ENCODE measurements at regions of chr5 and their contacts with region 1.

Region 1: GRCh38 chr5:64958757-64959391 is 190.1 kb downstream of the CWC27 start:
- DNase-seq: peak; percentile 30
- H3K4me3 Mint-ChIP-seq: no peak overlapping the region
- H3K27ac Mint-ChIP-seq: no peak overlapping the region
- H3K4me1 Mint-ChIP-seq: peaks cover under 1% of the 10 kb centered on the region
- H3K27me3 Mint-ChIP-seq: no peaks in the 10 kb centered on the region
- CTCF ChIP-seq: peak; percentile 42

Region 2: GRCh38 chr5:64811050-64811640 is 147.7 kb before region 1 on chr5:
- CTCF ChIA-PET with region 1: interaction called, 4 read pairs
- POLR2A ChIA-PET with region 1: no interaction called
- intact Hi-C with region 1: loop called (anchors 1 kb)
- DNase-seq: peak; percentile 45
- H3K4me3 Mint-ChIP-seq: no peak overlapping the region
- H3K27ac Mint-ChIP-seq: no peak overlapping the region
- H3K4me1 Mint-ChIP-seq: peaks cover 8% of the 10 kb centered on the region
- H3K27me3 Mint-ChIP-seq: no peaks in the 10 kb centered on the region
- CTCF ChIP-seq: peak; percentile 71

Region 3: GRCh38 chr5:65102828-65103711 is 144.2 kb after region 1 on chr5:
- CTCF ChIA-PET with region 1: interaction called, 3 read pairs
- POLR2A ChIA-PET with region 1: no interaction called
- intact Hi-C with region 1: loop called (anchors 10 kb)
- DNase-seq: peak; percentile 42
- H3K4me3 Mint-ChIP-seq: peak overlapping the region; percentile 48
- H3K27ac Mint-ChIP-seq: no peak overlapping the region
- H3K4me1 Mint-ChIP-seq: peaks cover 12% of the 10 kb centered on the region
- H3K27me3 Mint-ChIP-seq: no peaks in the 10 kb centered on the region
- CTCF ChIP-seq: peak; percentile 9

Region 4: DNA sequence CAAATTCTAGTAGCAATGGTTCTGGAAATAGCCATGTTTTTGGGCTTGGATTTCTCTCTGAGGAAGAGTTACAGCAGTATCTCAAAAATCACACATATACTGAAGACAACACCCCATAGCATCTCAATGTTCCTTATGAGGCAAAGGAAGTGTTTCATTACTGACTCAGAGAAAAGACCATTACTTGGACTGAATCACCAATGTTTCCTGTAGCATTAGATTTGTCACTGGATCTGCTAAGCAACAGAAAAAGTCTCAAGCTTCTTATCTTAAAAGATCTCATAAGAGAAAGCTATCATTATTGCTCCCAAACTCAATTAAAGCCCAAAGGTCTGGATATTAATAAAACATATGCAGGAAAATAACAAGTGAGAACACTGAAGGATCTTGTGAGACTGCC is 250.5 kb after region 1 on chr5:
- CTCF ChIA-PET with region 1: no interaction called
- POLR2A ChIA-PET with region 1: no interaction called
- intact Hi-C with region 1: loop called (anchors 10 kb)
- DNase-seq: peak; percentile 45
- H3K4me3 Mint-ChIP-seq: no peak overlapping the region
- H3K27ac Mint-ChIP-seq: peak overlapping the region; percentile 77
- H3K4me1 Mint-ChIP-seq: peaks cover 20% of the 10 kb centered on the region
- H3K27me3 Mint-ChIP-seq: no peaks in the 10 kb centered on the region
- CTCF ChIP-seq: no peak

Region 5: DNA sequence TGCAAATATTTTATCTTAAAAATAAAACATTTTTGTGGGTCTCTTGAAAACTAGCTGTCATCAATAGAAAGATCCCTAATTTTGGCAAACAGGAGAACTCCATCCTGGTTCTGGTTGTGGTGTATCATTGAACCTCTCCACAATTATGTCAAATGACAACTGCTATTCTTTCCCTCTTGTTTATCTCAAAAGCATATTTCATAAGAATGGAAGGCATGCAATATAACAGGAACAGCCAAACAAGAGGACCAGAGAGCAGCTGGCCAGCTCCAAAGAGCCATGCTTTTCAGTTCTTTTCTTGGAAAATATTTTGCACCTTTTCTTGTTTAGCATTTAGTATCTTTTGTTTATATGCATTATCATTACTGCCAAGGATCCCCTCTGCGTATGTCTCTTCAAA is 397.4 kb after region 1 on chr5:
- CTCF ChIA-PET with region 1: no interaction called
- POLR2A ChIA-PET with region 1: no interaction called
- intact Hi-C with region 1: loop called (anchors 5 kb)
- DNase-seq: no peak
- H3K4me3 Mint-ChIP-seq: no peak overlapping the region
- H3K27ac Mint-ChIP-seq: no peak overlapping the region
- H3K4me1 Mint-ChIP-seq: no peaks in the 10 kb centered on the region
- H3K27me3 Mint-ChIP-seq: no peaks in the 10 kb centered on the region
- CTCF ChIP-seq: no peak

Measured in MCF 10A (cell line).